ENCODE measurements at regions of chr2 and their contacts with region 1.

Region 1: GRCh38 chr2:9799665-9800632 is 43.3 kb upstream of the TAF1B start:
- DNase-seq: peak; percentile 81
- H3K4me3 ChIP-seq: no peak overlapping the region
- H3K27ac ChIP-seq: peak overlapping the region; percentile 93
- H3K4me1 ChIP-seq: peaks cover 54% of the 10 kb centered on the region
- H3K27me3 ChIP-seq: no peaks in the 10 kb centered on the region
- CTCF ChIP-seq: peak; percentile 98 to 100

Region 2: DNA sequence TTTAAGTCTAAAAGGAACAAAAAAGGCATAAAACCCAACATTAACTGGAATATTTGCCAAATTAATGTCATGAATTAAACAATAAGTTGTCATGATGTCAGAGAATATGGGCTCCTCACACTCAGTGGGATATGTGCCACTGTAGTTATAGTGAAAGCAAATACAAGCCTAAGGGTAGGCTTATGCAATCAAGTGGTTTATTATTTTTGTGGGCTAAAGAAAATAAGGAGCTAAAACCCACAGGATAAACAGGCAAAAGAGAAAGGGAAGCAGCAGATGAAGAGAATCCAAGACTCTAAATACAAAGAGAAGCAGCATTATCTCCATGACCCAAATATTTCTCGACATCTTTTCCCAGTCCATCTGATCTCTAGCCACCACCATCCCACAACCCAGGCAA is 186.7 kb before region 1 on chr2:
- CTCF ChIA-PET with region 1: no interaction called
- dilution Hi-C with region 1: no loop called
- in situ Hi-C with region 1: no loop called
- intact Hi-C with region 1: no loop called
- DNase-seq: peak; percentile 82
- H3K4me3 ChIP-seq: no peak overlapping the region
- H3K27ac ChIP-seq: no peak overlapping the region
- H3K4me1 ChIP-seq: peaks cover 21% of the 10 kb centered on the region
- H3K27me3 ChIP-seq: no peaks in the 10 kb centered on the region
- CTCF ChIP-seq: no peak

Region 3: GRCh38 chr2:9770308-9771100 is 29.4 kb before region 1 on chr2:
- CTCF ChIA-PET with region 1: interaction called, 4 read pairs
- dilution Hi-C with region 1: no loop called
- in situ Hi-C with region 1: no loop called
- intact Hi-C with region 1: loop called (anchors 1 kb)
- DNase-seq: peak; percentile 73
- H3K4me3 ChIP-seq: no peak overlapping the region
- H3K27ac ChIP-seq: peak overlapping the region; percentile 27
- H3K4me1 ChIP-seq: peaks cover 44% of the 10 kb centered on the region
- H3K27me3 ChIP-seq: no peaks in the 10 kb centered on the region
- CTCF ChIP-seq: peak; percentile 68 to 78

Region 4: GRCh38 chr2:9830690-9831410 is 30.9 kb after region 1 on chr2:
- CTCF ChIA-PET with region 1: no interaction called
- dilution Hi-C with region 1: no loop called
- in situ Hi-C with region 1: no loop called
- intact Hi-C with region 1: loop called (anchors 2 kb)
- DNase-seq: peak; percentile 37
- H3K4me3 ChIP-seq: no peak overlapping the region
- H3K27ac ChIP-seq: peak overlapping the region; percentile 14
- H3K4me1 ChIP-seq: peaks cover 21% of the 10 kb centered on the region
- H3K27me3 ChIP-seq: no peaks in the 10 kb centered on the region
- CTCF ChIP-seq: no peak

Region 5: DNA sequence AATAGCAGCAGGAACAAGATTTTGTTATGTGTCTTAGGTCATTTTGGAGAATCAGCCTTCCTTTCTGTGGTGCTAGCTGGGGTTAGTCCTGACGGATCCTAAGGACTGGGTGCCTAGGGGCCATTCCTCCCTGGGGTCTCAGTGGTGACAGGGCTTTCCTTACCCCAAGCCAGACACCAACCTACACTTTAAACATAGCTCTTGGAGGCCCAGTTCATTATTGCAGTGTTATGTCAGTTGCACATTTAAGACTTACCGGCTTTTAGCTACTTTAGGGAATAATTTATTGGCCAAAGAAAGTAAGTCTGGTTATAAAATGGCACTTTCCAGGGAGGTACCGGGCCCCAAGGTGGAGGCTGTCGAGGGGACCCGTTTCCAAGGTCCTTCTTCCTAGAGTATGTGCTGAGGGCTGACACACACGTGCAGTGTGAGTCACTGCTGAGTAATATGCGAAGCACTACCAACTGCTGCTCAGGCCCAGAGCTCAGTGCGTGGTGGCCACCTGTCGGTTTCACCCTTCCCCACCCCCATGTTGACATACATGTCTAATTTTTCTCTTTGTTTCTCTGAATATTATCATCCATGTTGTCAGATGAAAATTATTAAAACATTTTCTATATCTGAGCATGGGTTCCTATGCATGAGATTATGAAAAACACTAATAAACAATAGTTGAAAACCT is 114.6 kb after region 1 on chr2:
- CTCF ChIA-PET with region 1: no interaction called
- dilution Hi-C with region 1: no loop called
- in situ Hi-C with region 1: no loop called
- intact Hi-C with region 1: loop called (anchors 1 kb)
- DNase-seq: peak; percentile 82
- H3K4me3 ChIP-seq: no peak overlapping the region
- H3K27ac ChIP-seq: peak overlapping the region; percentile 15
- H3K4me1 ChIP-seq: peaks cover 8% of the 10 kb centered on the region
- H3K27me3 ChIP-seq: no peaks in the 10 kb centered on the region
- CTCF ChIP-seq: peak; percentile 27 to 71

Region 6: GRCh38 chr2:10057231-10058107 is 257.5 kb after region 1 on chr2:
- CTCF ChIA-PET with region 1: no interaction called
- dilution Hi-C with region 1: no loop called
- in situ Hi-C with region 1: loop called in 1 of 2 experiments (anchors 10 kb)
- intact Hi-C with region 1: no loop called
- DNase-seq: peak; percentile 83
- H3K4me3 ChIP-seq: peak overlapping the region; percentile 16 to 33 (median 23)
- H3K27ac ChIP-seq: peak overlapping the region; percentile 64
- H3K4me1 ChIP-seq: peaks cover 23% of the 10 kb centered on the region
- H3K27me3 ChIP-seq: no peaks in the 10 kb centered on the region
- CTCF ChIP-seq: no peak

Region 7: GRCh38 chr2:10091182-10091888 is 291.4 kb after region 1 on chr2:
- CTCF ChIA-PET with region 1: no interaction called
- dilution Hi-C with region 1: no loop called
- in situ Hi-C with region 1: no loop called
- intact Hi-C with region 1: no loop called
- DNase-seq: no peak
- H3K4me3 ChIP-seq: no peak overlapping the region
- H3K27ac ChIP-seq: no peak overlapping the region
- H3K4me1 ChIP-seq: peaks cover 11% of the 10 kb centered on the region
- H3K27me3 ChIP-seq: no peaks in the 10 kb centered on the region
- CTCF ChIP-seq: no peak

Region 8: GRCh38 chr2:10342245-10342951 is 542.4 kb after region 1 on chr2:
- CTCF ChIA-PET with region 1: no interaction called
- dilution Hi-C with region 1: no loop called
- in situ Hi-C with region 1: no loop called
- intact Hi-C with region 1: no loop called
- DNase-seq: no peak
- H3K4me3 ChIP-seq: no peak overlapping the region
- H3K27ac ChIP-seq: no peak overlapping the region
- H3K4me1 ChIP-seq: peaks cover 20% of the 10 kb centered on the region
- H3K27me3 ChIP-seq: no peaks in the 10 kb centered on the region
- CTCF ChIP-seq: no peak

Region 9: GRCh38 chr2:10448208-10448645 is 648.3 kb after region 1 on chr2 and contains the start of gene ODC1:
- CTCF ChIA-PET with region 1: no interaction called
- dilution Hi-C with region 1: loop called (anchors 25 kb)
- in situ Hi-C with region 1: no loop called
- intact Hi-C with region 1: no loop called
- DNase-seq: peak; percentile 88
- H3K4me3 ChIP-seq: peak within 1 kb of the TSS; percentile 46 to 61 (median 61)
- H3K27ac ChIP-seq: peak within 1 kb of the TSS; percentile 45
- H3K4me1 ChIP-seq: peaks cover 31% of the 10 kb centered on the region
- H3K27me3 ChIP-seq: no peaks in the 10 kb centered on the region
- CTCF ChIP-seq: no peak
- total RNA-seq, gene ODC1: 64.0 to 161 TPM

Measured in mammary epithelial cell (primary cell).